ENCODE measurements at regions of chr1 and their contacts with region 1.

Region 1: DNA sequence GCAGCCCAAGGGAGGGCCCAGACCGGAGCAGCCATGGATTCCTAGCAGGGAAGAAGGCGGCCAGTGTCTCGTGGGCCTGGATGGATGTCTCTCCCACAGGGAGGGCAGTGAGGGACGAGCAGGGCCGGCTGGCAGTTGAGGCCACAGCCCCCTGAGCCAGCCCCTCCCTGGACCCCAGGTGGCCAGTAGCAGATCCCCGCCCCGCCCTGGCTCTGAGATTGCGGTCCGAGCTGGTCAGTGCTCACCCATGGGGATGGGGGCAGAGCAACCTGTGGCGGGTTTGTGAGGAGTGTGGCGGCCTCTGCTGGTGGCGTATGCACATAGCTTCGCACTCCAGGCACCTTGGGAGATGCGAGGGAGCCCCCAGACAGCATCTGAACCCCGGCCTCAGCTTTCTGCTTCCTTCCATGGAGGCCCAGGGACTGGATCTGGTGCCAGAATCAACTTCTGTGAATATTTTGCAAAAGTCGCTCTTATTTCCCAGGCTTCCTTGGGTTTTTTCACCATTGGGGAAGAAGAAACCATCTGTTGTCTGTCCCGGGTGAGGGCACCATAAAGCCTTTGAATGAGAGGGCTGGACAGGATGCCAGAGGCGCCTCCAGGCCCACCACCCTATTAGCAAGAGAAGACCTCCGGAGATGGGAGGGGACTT is 8.4 kb upstream of the KCNN3 start:
- DNase-seq: peak; percentile 87
- H3K4me3 ChIP-seq: peak overlapping the region in 1 of 2 experiments; percentile 38; a peak in 1 of 4 replicates
- H3K27ac ChIP-seq: no peak overlapping the region
- H3K4me1 ChIP-seq: peaks cover 0 to 3% of the 10 kb centered on the region in 2 experiments; a peak in 1 of 4 replicates
- H3K27me3 ChIP-seq: no peaks in the 10 kb centered on the region; the same call in 1 of the 2 replicates
- CTCF ChIP-seq: peak; percentile 88
- EP300 ChIP-seq: no peak
- RAD21 ChIP-seq: peak; percentile 96

Region 2: DNA sequence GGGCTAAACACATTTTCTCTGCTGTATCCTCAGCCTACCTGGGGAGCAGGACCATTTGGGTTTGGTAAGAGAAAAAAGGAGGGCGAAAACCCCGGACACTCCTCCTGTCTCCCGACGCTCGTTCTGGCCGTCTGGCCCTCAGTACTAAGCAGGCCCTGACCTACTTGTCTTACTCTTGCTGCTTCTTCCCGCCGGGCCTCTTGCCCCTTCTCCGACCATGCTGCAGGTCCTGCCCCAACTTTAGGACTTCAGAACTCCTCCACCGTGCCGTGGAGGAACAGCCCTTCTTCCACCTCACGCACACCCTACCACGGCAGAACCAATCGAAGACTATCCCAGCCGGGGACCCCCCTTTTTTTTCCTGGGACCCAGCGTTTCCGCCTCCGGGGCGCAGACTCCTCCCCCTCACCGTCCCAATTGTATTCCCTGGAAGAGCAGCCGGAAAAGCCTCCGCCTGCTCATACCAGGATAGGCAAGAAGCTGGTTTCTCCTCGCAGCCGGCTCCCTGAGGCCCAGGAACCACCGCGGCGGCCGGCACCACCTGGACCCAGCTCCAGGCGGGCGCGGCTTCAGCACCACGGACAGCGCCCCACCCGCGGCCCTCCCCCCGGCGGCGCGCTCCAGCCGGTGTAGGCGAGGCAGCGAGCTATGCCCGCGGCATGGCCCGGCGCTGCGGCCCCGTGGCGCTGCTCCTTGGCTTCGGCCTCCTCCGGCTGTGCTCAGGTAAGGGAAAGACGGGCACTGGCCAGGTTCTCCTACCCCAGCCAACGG is 310.9 kb before region 1 on chr1 and contains the start of gene CHRNB2:
- CTCF ChIA-PET with region 1: interaction called, 12 read pairs
- POLR2A ChIA-PET with region 1: no interaction called
- DNase-seq: peak; percentile 97
- H3K4me3 ChIP-seq: peak within 1 kb of the TSS; percentile 46 to 54
- H3K27ac ChIP-seq: peak within 1 kb of the TSS in 1 of 2 experiments; percentile 61; a peak in 2 of 4 replicates
- H3K4me1 ChIP-seq: peaks cover 0 to 22% of the 10 kb centered on the region in 2 experiments; a peak in 1 of 4 replicates
- H3K27me3 ChIP-seq: no peaks in the 10 kb centered on the region; the same call in 1 of the 2 replicates
- CTCF ChIP-seq: no peak
- EP300 ChIP-seq: no peak
- RAD21 ChIP-seq: no peak
- polyA plus RNA-seq, gene CHRNB2: 0.64 and 0.93 TPM in 2 replicates

Region 3: DNA sequence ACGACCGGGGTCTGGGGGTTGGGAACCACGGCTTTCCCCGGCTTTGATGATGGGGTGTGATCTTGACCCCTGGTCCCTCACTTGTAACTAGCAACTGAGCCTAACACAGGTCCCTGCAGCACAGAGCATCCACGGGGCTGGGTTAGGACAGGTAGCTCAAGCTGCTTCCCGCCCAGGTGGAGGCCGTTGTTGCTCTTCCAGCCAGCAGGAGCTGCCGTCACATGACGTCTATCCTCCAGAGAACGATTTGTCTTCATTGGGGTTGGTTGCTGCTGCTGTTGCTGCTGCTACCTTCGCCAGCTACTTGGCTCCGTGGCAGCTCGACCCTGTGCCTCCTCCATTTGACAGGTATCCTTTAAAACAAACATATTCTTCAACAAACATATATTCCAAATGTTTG is 196.2 kb before region 1 on chr1:
- CTCF ChIA-PET with region 1: interaction called, 13 read pairs
- POLR2A ChIA-PET with region 1: no interaction called
- DNase-seq: no peak
- H3K4me3 ChIP-seq: no peak overlapping the region
- H3K27ac ChIP-seq: no peak overlapping the region
- H3K4me1 ChIP-seq: no peaks in the 10 kb centered on the region; a peak in 1 of 4 replicates
- H3K27me3 ChIP-seq: peaks cover 12% of the 10 kb centered on the region
- CTCF ChIP-seq: no peak
- EP300 ChIP-seq: no peak
- RAD21 ChIP-seq: no peak

Region 4: DNA sequence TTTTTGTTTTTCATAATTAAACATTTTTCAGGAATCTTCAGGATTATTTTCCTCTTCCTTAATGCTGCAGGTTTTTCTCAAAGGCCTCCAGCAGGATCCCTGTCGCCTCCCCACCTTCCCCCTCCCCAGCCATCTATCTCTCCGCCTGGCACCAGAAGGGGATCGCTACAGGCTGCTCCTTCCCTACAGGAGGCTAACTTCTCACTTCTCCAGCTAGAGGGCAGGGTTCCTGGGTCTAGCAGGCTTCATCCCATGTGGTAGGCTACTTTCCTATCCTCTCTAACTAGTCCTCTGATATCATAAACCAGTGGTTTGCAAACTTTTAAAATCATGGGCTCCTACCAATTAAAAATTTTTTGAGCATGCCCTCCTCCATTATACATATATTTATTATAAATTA is 112.5 kb before region 1 on chr1:
- CTCF ChIA-PET with region 1: interaction called, 23 read pairs
- POLR2A ChIA-PET with region 1: no interaction called
- DNase-seq: peak; percentile 68
- H3K4me3 ChIP-seq: no peak overlapping the region
- H3K27ac ChIP-seq: no peak overlapping the region
- H3K4me1 ChIP-seq: peaks cover 0 to 7% of the 10 kb centered on the region in 2 experiments; a peak in 2 of 4 replicates
- H3K27me3 ChIP-seq: peaks cover 15% of the 10 kb centered on the region; the same call in 1 of the 2 replicates
- CTCF ChIP-seq: peak; percentile 46
- EP300 ChIP-seq: no peak
- RAD21 ChIP-seq: peak; percentile 62

Region 5: GRCh38 chr1:154856049-154856448 is 22.4 kb before region 1 on chr1:
- CTCF ChIA-PET with region 1: interaction called, 19 read pairs
- POLR2A ChIA-PET with region 1: no interaction called
- DNase-seq: peak; percentile 56
- H3K4me3 ChIP-seq: no peak overlapping the region
- H3K27ac ChIP-seq: no peak overlapping the region; a peak in 1 of 4 replicates
- H3K4me1 ChIP-seq: peaks cover 0 to 23% of the 10 kb centered on the region in 2 experiments; a peak in 1 of 4 replicates
- H3K27me3 ChIP-seq: no peaks in the 10 kb centered on the region
- CTCF ChIP-seq: no peak
- EP300 ChIP-seq: peak in 1 of 2 experiments; percentile 21; a peak in 1 of 4 replicates
- RAD21 ChIP-seq: peak; percentile 37; the same call in 1 of the 2 replicates

Region 6: GRCh38 chr1:154943649-154944400 is 65.3 kb after region 1 on chr1:
- CTCF ChIA-PET with region 1: interaction called, 21 read pairs
- POLR2A ChIA-PET with region 1: no interaction called
- DNase-seq: peak; percentile 83
- H3K4me3 ChIP-seq: no peak overlapping the region
- H3K27ac ChIP-seq: no peak overlapping the region
- H3K4me1 ChIP-seq: peaks cover 4 to 25% of the 10 kb centered on the region in 2 experiments; a peak in 2 of 4 replicates
- H3K27me3 ChIP-seq: no peaks in the 10 kb centered on the region
- CTCF ChIP-seq: peak; percentile 82
- EP300 ChIP-seq: no peak
- RAD21 ChIP-seq: peak; percentile 80